ENCODE measurements at regions of chr2 and their contacts with region 1.

Region 1: DNA sequence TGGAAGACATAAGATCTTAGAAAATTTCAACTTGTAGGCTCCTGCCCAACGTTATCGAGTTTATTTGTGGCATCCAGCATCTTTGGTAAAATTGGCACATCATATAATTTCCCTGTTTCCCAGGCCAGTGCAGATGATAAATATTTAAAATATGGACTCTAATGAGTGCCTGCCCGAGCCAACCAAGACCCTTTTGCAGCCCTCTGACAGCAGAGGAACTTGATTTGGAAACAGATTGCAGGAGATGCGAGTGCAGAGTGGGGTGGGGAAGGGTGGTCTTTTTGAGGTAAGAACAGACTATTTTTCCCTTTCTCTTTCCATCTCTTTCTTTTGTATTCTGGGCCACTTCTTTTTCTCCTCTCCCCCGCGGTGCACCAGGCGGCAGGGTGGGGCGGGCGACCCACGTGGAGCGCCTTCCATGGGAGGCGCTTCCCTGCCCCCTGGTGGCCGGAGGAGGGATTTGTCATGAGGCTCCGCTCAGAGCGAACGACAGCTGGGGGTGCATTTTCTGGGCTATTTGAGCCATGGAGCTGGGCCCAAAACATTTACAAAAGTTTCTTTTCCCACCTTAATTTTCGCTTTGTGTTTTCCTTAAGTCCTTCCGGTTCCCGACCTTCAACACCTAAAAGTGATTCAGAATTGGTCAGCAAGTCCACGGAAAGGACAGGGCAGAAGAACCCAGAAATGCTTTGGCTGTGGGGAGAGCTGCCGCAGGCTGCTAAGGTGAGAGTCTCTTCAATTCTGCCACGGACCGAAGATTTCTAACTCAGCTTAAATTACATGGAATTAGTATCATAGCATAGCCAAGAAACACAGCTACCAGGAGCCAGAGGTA is 32.7 kb downstream of the LPIN1 start:
- DNase-seq: no peak
- H3K4me3 ChIP-seq: no peak overlapping the region
- CTCF ChIP-seq: peak; percentile 93

Region 2: GRCh38 chr2:11688222-11689069 is 90.7 kb before region 1 on chr2:
- CTCF ChIA-PET with region 1: interaction called, 508 read pairs
- POLR2A ChIA-PET with region 1: no interaction called
- DNase-seq: peak; percentile 17
- H3K4me3 ChIP-seq: peak overlapping the region; percentile 36
- CTCF ChIP-seq: peak; percentile 85

Region 3: GRCh38 chr2:11743846-11744553 is 35.1 kb before region 1 on chr2:
- CTCF ChIA-PET with region 1: interaction called, 428 read pairs
- POLR2A ChIA-PET with region 1: no interaction called
- DNase-seq: peak; percentile 98
- H3K4me3 ChIP-seq: peak overlapping the region; percentile 40
- CTCF ChIP-seq: no peak

Region 4: GRCh38 chr2:11764359-11764758 is 14.8 kb before region 1 on chr2:
- CTCF ChIA-PET with region 1: interaction called, 428 read pairs
- POLR2A ChIA-PET with region 1: no interaction called
- DNase-seq: no peak
- H3K4me3 ChIP-seq: no peak overlapping the region
- CTCF ChIP-seq: no peak